SK-N-SH (cell line): ENCODE measurements at regions of chr17 and their contacts with region 1.

Region 1: GRCh38 chr17:41548844-41549595 is 20.9 kb upstream of the KRT19 start:
- DNase-seq: peak; percentile 92
- H3K4me3 ChIP-seq: peak overlapping the region; percentile 21 to 25; a peak in 2 of 4 replicates
- H3K27ac ChIP-seq: peak overlapping the region; percentile 85 to 86
- H3K4me1 ChIP-seq: peaks cover 17 to 30% of the 10 kb centered on the region in 2 experiments; a peak in 3 of 4 replicates
- H3K27me3 ChIP-seq: no peaks in the 10 kb centered on the region
- CTCF ChIP-seq: peak; percentile 94
- EP300 ChIP-seq: peak in 1 of 2 experiments; percentile 6; a peak in 2 of 4 replicates
- RAD21 ChIP-seq: peak; percentile 92

Region 2: DNA sequence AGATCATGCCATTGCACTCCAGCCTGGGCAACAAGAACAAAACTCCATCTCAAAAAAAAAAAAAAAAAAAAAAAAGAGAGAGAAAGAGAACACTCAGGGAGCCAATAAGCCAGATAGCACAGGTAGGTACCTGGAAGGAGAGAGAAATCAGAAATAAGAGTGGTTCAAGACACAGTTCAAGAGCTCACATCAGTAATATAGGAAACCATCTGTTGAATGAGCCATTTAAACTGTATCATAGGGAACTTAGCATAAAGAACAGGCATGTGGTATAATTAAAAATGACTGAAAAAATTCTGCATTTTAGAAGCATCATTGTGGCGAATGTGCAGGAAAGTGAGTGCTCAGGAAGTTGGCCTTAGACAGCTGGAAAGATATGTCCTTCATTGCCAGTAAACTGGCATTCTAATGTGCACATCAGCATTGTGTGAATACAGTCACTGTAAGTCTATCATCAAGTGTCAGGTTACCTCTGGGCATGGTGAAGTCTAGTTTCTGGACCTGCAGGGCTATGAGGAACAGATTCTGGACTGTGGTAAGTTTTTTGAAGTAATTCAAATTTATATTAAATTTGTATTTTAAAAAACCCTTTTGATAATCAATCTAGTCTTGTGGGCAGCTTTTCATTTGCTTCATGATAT is 702.4 kb before region 1 on chr17:
- CTCF ChIA-PET with region 1: interaction called, 12 read pairs
- POLR2A ChIA-PET with region 1: no interaction called
- DNase-seq: no peak
- H3K4me3 ChIP-seq: no peak overlapping the region
- H3K27ac ChIP-seq: no peak overlapping the region
- H3K4me1 ChIP-seq: no peaks in the 10 kb centered on the region
- H3K27me3 ChIP-seq: peaks cover 21% of the 10 kb centered on the region; the same call in 1 of the 2 replicates
- CTCF ChIP-seq: no peak
- EP300 ChIP-seq: no peak
- RAD21 ChIP-seq: no peak

Region 3: DNA sequence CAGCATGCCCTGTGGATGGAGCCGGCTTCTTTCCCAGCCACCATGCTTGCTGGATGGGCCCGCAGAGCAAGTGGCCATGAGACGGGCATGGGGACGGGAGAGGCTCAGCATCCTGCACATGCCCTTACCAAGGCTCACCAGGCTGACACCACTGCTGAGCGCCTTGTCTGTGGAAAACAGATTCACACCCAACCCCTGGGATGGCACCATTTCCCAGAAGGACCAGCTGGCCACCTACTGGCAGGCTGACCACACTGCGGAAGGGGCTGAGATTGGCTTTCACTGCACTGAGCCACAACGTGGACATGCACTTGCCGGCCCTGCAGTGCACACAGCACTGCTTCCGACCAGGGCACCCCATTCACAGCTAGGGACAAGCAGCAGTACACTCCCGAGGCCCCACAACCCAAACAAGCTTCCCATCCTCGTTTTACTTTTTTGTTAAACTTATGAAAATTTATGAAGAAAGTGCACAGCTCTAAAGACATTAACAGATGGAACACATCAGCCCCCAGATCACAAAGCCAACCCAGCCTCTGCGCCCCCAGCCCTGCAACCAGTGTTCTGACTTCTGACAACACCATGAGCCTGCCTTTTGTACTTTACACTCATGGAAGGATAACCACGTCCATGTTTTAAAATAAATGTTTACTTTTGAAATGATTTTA is 219.6 kb before region 1 on chr17:
- CTCF ChIA-PET with region 1: interaction called, 61 read pairs
- POLR2A ChIA-PET with region 1: no interaction called
- DNase-seq: peak; percentile 70
- H3K4me3 ChIP-seq: no peak overlapping the region
- H3K27ac ChIP-seq: no peak overlapping the region
- H3K4me1 ChIP-seq: no peaks in the 10 kb centered on the region
- H3K27me3 ChIP-seq: no peaks in the 10 kb centered on the region
- CTCF ChIP-seq: peak; percentile 70
- EP300 ChIP-seq: no peak
- RAD21 ChIP-seq: peak; percentile 65

Region 4: GRCh38 chr17:41468346-41468745 is 80.7 kb before region 1 on chr17:
- CTCF ChIA-PET with region 1: interaction called, 11 read pairs
- POLR2A ChIA-PET with region 1: no interaction called
- DNase-seq: no peak
- H3K4me3 ChIP-seq: no peak overlapping the region
- H3K27ac ChIP-seq: no peak overlapping the region
- H3K4me1 ChIP-seq: peaks cover 11% of the 10 kb centered on the region in 2 experiments; a peak in 2 of 4 replicates
- H3K27me3 ChIP-seq: no peaks in the 10 kb centered on the region
- CTCF ChIP-seq: no peak
- EP300 ChIP-seq: no peak
- RAD21 ChIP-seq: no peak

Region 5: DNA sequence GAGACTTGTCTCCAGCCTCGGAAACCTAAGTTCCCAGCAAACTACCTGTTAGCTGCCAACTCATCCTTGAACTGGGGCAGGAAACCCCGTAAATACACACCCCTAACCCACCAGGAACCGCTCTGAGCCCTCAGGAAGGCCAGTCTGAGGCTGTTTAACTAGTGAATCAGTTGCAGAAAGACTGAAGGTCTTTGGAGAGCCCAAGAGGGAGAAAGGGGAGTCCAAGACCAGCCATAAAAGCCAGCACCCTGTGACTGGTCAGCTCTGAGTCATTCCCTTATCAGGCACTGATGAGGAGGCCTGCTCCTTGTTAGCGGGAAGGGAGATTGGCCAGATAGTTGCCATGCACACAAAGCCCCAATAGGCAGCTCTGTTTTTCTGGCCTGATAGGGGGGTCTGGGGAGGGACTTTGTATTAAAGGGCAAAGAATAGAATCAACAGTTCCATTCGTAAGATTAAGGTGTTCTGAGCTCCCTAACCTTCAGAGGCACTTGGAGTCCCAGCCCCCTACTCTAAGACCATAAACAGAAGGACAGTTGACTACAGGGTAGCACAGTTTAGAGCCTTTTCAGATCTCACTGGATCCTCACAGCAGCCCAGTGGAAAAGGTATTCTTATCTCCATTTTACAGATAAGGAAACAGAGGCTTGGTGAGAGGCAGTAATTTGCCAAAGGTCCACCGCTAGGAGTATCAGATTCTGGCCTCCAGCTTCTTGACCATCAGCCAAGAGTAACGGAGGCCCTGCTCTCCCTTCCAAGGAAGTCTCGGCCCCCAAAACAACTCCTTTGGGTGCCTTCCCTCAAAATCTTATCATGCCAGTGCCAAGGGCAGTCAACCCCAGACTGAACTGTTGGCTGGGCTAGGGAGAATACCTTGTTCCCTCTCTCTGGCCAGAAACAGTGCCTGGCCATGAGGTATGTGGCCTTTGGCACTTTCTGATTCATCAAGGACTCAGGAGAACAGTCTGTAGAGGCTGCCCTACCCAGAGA is 18.7 kb before region 1 on chr17:
- CTCF ChIA-PET with region 1: interaction called, 144 read pairs
- POLR2A ChIA-PET with region 1: interaction called, 16 read pairs
- DNase-seq: peak; percentile 93
- H3K4me3 ChIP-seq: no peak overlapping the region
- H3K27ac ChIP-seq: peak overlapping the region; percentile 94 to 99
- H3K4me1 ChIP-seq: peaks cover 24 to 38% of the 10 kb centered on the region in 2 experiments
- H3K27me3 ChIP-seq: no peaks in the 10 kb centered on the region
- CTCF ChIP-seq: no peak
- EP300 ChIP-seq: peak; percentile 95 to 97
- RAD21 ChIP-seq: peak; percentile 49

Region 6: DNA sequence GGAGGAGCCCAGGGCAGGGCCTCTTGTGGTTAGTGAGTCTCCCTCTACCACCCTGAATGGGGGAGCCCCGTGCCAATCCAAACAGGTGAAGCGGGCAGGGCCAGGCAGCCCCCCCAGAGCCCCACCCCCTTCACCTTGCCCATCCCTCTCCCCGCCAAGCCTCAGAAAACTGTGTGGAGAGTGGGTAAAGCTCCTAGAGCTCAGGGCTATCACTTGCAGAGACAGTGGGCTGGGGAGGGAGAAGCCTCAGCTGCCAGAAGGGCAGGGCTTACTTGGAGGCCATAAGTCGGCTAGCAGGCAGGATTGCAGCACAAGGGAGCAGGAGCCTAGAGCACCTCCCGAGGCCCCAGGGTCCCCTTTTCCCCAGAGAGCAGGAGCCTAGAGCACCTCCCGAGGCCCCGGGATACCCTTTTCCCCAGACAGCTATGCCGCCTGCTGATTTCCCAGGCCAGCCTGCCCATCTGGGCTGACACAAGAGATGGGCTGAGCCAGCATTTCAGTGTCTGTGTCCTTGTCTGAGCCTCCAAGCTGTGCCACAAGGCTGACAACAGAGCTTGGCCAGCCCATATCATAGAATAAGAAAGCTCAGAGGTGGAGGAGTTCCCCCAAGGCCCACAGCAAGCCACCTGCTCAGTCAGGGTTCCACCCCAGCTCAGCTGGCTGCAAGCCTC is 44.4 kb after region 1 on chr17:
- CTCF ChIA-PET with region 1: interaction called, 12 read pairs
- POLR2A ChIA-PET with region 1: no interaction called
- DNase-seq: no peak
- H3K4me3 ChIP-seq: no peak overlapping the region
- H3K27ac ChIP-seq: no peak overlapping the region
- H3K4me1 ChIP-seq: peaks cover 0 to 4% of the 10 kb centered on the region in 2 experiments; a peak in 1 of 4 replicates
- H3K27me3 ChIP-seq: peaks cover 40% of the 10 kb centered on the region
- CTCF ChIP-seq: no peak
- EP300 ChIP-seq: no peak
- RAD21 ChIP-seq: no peak

Region 7: DNA sequence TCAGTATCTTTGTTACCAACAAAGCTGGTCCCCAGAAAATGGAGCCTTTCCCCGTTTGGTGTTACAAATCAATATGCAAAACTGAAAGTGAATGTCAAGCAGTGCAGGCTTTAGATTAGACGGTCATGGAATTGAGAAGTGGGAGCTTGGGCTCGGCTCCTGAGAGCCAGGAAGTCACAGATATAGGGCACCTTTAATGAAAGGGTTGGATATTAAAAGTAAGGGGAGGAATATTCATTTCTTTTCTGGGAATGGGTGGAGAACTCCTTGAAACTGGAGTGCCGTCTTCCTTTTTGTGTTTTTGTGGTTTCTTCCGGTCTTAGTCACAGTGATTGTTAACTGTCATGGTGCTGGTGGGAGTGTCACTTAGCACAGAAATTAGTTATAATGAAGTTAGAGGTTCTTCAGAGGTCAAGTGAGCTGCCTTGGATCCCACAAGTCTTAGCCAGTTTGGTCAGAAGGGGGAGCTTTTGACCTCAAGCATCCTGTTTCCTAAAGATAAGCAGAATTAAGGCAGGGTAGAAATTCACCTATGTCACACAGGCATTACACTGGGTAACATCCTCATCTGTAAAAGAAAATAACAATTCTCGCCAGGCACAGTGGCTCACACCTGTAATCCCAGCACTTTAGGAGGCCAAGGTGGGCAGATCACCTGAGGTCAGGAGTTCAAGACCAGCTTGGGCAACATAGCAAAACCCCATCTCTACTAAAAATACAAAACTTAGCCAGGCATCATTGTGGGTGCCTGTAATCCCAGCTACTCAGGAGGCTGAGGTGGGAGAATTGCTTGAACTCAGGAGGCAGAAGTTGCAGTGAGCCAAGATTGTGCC is 130.1 kb after region 1 on chr17:
- CTCF ChIA-PET with region 1: interaction called, 14 read pairs
- POLR2A ChIA-PET with region 1: no interaction called
- DNase-seq: no peak
- H3K4me3 ChIP-seq: no peak overlapping the region
- H3K27ac ChIP-seq: peak overlapping the region in 1 of 2 experiments; percentile 36; a peak in 2 of 4 replicates
- H3K4me1 ChIP-seq: peaks cover 0 to 10% of the 10 kb centered on the region in 2 experiments; a peak in 1 of 4 replicates
- H3K27me3 ChIP-seq: peaks cover 8% of the 10 kb centered on the region; the same call in 1 of the 2 replicates
- CTCF ChIP-seq: no peak; the same call in 1 of the 2 replicates
- EP300 ChIP-seq: no peak
- RAD21 ChIP-seq: no peak

Region 8: DNA sequence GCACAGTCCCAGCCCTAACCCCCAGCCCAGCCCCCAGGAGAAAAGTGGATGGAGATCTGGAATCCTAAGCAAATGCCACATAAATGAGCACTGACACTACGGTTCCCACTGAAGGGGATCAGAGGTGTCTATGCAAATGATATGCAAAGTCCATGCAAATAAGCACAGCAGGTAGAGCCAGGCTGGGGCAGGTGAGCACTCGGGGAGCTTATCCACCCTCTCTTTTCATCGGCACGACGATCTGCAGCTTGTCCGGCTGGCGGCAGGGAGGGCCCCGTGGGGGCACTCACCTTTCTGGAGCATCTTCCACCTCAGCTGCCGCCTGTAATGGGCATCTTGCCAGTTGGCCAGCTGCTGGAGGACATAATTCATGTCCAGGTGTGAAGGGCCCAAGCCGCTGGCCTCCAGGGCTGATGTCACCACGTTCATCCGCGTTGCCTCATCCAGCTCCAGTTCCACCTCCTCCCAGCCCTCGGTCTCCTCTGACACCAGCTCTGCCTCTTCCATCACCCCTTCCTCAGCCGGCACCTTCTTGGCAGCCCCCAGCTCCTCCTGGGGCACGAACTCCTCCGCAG is 175.5 kb after region 1 on chr17:
- CTCF ChIA-PET with region 1: no interaction called
- POLR2A ChIA-PET with region 1: no interaction called
- DNase-seq: no peak
- H3K4me3 ChIP-seq: no peak overlapping the region
- H3K27ac ChIP-seq: no peak overlapping the region
- H3K4me1 ChIP-seq: no peaks in the 10 kb centered on the region
- H3K27me3 ChIP-seq: no peaks in the 10 kb centered on the region
- CTCF ChIP-seq: no peak
- EP300 ChIP-seq: no peak
- RAD21 ChIP-seq: no peak